Heart left ventricle (tissue), 16 donors: ENCODE measurements at regions of chr1 and their contacts with region 1.

Region 1: GRCh38 chr1:203463469-203464062 is 12.0 kb upstream of the PRELP start:
- DNase-seq: no peak
- ATAC-seq: peak; percentile 10 to 72 (median 44)
- H3K4me3 ChIP-seq: peak overlapping the region in 1 of 12 donors; percentile 6
- H3K27ac ChIP-seq: peak overlapping the region in 10 of 12 donors; percentile 2 to 89 (median 72)
- H3K4me1 ChIP-seq: peaks cover 0 to 57% (median 27%) of the 10 kb centered on the region in 12 donors
- H3K27me3 ChIP-seq: no peaks in the 10 kb centered on the region
- CTCF ChIP-seq: no peak
- POLR2A ChIP-seq: no peak

Region 2: DNA sequence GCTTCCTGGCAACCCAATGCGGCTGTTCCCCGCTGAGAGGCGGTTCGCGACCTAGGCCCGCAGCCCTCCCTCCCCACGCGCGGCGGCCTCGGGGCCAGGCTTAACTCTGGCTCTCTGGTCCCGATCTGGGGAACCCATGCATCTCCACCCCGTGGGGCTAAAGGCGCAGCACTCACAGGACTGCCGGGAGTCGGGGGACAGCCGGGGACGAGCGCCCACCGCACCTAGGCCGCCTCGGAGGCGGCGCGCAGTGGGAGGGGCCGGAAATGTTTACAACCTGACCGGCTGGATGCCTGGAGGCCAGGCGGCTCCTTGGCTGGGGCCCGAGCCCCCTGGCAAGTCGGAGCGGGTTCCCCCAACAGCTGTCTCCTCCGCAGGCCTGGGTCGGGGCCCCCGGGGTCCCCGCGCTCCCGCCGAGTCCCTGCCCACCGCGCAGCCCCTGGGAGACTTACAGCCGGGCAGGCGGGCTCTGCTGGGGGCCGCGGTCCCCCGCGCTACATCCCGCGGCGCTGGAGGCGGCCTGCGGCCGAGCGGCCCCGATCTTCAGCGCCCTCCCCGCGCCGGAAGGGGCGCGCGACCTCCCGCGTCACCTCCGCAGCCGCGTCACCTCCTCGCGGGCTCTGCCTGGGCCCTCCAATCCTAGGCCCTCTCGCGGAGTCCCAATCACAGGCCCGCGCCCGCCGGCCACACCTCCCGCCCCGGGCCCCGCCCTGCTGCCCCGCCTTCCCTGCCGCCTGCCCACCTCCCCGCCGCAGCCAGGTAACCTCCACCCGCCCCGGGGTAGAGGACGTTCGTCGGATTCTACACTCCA is 505.6 kb before region 1 on chr1 and contains the start of gene ADIPOR1:
- intact Hi-C with region 1: no loop called
- DNase-seq: peak; percentile 92 to 96 (median 94)
- ATAC-seq: peak; percentile 97 to 99 (median 98)
- H3K4me3 ChIP-seq: peak within 1 kb of the TSS; percentile 92 to 100 (median 98)
- H3K27ac ChIP-seq: peak within 1 kb of the TSS; percentile 65 to 99 (median 96)
- H3K4me1 ChIP-seq: peaks cover 2 to 64% (median 45%) of the 10 kb centered on the region in 12 donors
- H3K27me3 ChIP-seq: no peaks in the 10 kb centered on the region
- CTCF ChIP-seq: peak in 6 of 12 donors; percentile 10 to 44 (median 35)
- POLR2A ChIP-seq: peak; percentile 92 to 95
- total RNA-seq, gene ADIPOR1: 91.4 to 155 (median 102) TPM

Region 3: GRCh38 chr1:203239526-203240305 is 223.8 kb before region 1 on chr1:
- intact Hi-C with region 1: loop called in 1 of 10 experiments (anchors 10 kb)
- DNase-seq: no peak
- ATAC-seq: no peak
- H3K4me3 ChIP-seq: no peak overlapping the region
- H3K27ac ChIP-seq: no peak overlapping the region
- H3K4me1 ChIP-seq: no peaks in the 10 kb centered on the region
- H3K27me3 ChIP-seq: peaks cover 0 to 12% (median 0%) of the 10 kb centered on the region in 9 donors
- CTCF ChIP-seq: no peak
- POLR2A ChIP-seq: no peak

Region 4: GRCh38 chr1:203524152-203524551 is 60.6 kb after region 1 on chr1:
- intact Hi-C with region 1: no loop called
- DNase-seq: no peak
- ATAC-seq: peak in 3 of 4 donors; percentile 29 to 45 (median 33)
- H3K4me3 ChIP-seq: no peak overlapping the region
- H3K27ac ChIP-seq: peak overlapping the region in 5 of 12 donors; percentile 8 to 62 (median 23)
- H3K4me1 ChIP-seq: peaks cover 0 to 45% (median 20%) of the 10 kb centered on the region in 12 donors
- H3K27me3 ChIP-seq: no peaks in the 10 kb centered on the region
- CTCF ChIP-seq: no peak
- POLR2A ChIP-seq: no peak

Region 5: GRCh38 chr1:203534527-203535230 is 71.1 kb after region 1 on chr1:
- intact Hi-C with region 1: no loop called
- DNase-seq: peak in 1 of 5 donors; percentile 63
- ATAC-seq: peak in 3 of 4 donors; percentile 24 to 60 (median 52)
- H3K4me3 ChIP-seq: no peak overlapping the region
- H3K27ac ChIP-seq: peak overlapping the region in 1 of 12 donors; percentile 83
- H3K4me1 ChIP-seq: peaks cover 0 to 25% (median 8%) of the 10 kb centered on the region in 12 donors
- H3K27me3 ChIP-seq: no peaks in the 10 kb centered on the region
- CTCF ChIP-seq: no peak
- POLR2A ChIP-seq: no peak

Region 6: GRCh38 chr1:204089044-204089751 is 625.6 kb after region 1 on chr1:
- intact Hi-C with region 1: no loop called
- DNase-seq: peak in 2 of 5 donors; percentile 37 to 52
- ATAC-seq: peak; percentile 12 to 61 (median 56)
- H3K4me3 ChIP-seq: no peak overlapping the region
- H3K27ac ChIP-seq: peak overlapping the region in 11 of 12 donors; percentile 26 to 92 (median 52)
- H3K4me1 ChIP-seq: peaks cover 6 to 90% (median 45%) of the 10 kb centered on the region in 12 donors
- H3K27me3 ChIP-seq: no peaks in the 10 kb centered on the region
- CTCF ChIP-seq: no peak
- POLR2A ChIP-seq: no peak